Calu3 (cell line): ENCODE measurements at regions of chr19 and their contacts with region 1.

Region 1: GRCh38 chr19:33794683-33795369 is 1.8 kb upstream of the KCTD15 start:
- DNase-seq: no peak
- H3K4me3 Mint-ChIP-seq: peak overlapping the region; percentile 71
- H3K27ac Mint-ChIP-seq: peak overlapping the region; percentile 48
- H3K4me1 Mint-ChIP-seq: no peaks in the 10 kb centered on the region
- H3K27me3 Mint-ChIP-seq: peaks cover 38% of the 10 kb centered on the region
- CTCF ChIP-seq: no peak

Region 2: DNA sequence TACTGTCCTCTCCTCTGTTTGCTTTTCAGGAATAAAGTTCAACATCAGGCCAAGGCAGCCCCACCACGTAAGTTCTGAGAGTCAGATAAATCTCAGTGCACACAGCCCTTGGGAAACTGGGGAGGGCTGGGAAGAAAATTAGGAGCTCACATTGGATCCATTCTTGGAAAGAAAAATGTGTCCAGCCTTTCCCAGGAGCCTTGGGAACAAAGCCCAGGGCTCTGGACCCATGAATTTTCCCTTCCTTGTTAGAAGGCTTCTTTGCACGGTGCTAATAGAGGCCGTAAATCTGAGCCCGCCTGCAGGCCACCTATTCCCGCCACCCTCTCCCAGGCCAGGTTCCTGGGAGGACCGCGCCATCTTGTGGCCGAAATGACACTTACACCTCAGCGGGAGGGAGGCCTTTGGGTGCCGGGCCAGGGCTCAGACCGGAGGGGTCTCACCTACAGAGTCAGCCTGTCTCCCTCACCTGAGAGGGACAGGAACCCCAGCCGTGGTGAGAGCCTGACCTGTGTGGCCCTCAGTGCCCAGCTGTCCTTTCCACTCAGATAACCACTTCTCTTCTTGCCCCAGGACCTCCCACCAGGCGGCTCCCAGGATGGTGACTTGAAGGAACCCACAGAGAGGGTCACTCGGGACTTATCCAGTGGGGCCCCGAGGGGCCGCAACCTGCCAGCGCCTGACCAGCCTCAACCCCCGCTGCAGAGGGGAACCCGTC is 23.3 kb before region 1 on chr19:
- CTCF ChIA-PET with region 1: no interaction called
- intact Hi-C with region 1: no loop called
- DNase-seq: peak; percentile 88
- H3K4me3 Mint-ChIP-seq: no peak overlapping the region
- H3K27ac Mint-ChIP-seq: no peak overlapping the region
- H3K4me1 Mint-ChIP-seq: no peaks in the 10 kb centered on the region
- H3K27me3 Mint-ChIP-seq: peaks cover 81% of the 10 kb centered on the region
- CTCF ChIP-seq: peak; percentile 90

Region 3: GRCh38 chr19:33998739-33999345 is 204.0 kb after region 1 on chr19:
- CTCF ChIA-PET with region 1: interaction called, 5 read pairs
- intact Hi-C with region 1: loop called (anchors 5 kb)
- DNase-seq: no peak
- H3K4me3 Mint-ChIP-seq: no peak overlapping the region
- H3K27ac Mint-ChIP-seq: no peak overlapping the region
- H3K4me1 Mint-ChIP-seq: no peaks in the 10 kb centered on the region
- H3K27me3 Mint-ChIP-seq: peaks cover 67% of the 10 kb centered on the region
- CTCF ChIP-seq: peak; percentile 32